ENCODE measurements at regions of chr11 and their contacts with region 1.

Region 1: DNA sequence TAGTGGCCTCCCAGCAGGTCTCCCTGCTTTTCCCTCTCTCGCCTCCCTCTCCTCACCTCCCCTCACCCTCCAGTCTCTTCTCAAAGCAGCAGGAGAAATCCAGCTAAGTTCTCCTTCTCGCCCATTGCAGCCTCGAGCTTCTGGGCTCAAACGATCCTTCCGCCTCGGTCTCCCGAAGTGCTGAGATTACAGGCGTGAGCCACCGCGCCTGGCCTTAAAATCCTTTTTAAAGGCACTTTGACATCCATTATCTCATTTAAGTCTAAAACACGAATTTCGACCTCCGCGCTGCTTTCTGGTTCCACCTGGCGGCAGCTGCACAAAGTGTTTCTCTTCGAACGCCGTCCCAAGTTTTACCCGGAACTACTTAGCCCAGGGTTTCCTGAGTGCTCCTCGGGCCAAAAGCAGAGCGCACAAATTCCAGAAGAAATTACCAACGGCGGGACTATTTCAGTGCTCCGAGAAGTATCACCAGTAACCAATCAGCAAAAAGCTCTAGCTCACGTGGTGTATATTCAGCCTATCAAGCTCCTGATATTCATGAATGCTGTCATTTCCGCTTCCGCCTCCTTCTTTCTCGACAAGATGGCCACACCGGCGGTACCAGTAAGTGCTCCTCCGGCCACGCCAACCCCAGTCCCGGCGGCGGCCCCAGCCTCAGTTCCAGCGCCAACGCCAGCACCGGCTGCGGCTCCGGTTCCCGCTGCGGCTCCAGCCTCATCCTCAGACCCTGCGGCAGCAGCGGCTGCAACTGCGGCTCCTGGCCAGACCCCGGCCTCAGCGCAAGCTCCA is at the start of gene EIF3F:
- DNase-seq: peak; percentile 92
- H3K4me3 Mint-ChIP-seq: peak within 1 kb of the TSS; percentile 89
- H3K27ac Mint-ChIP-seq: peak within 1 kb of the TSS; percentile 88
- H3K4me1 Mint-ChIP-seq: peaks cover 41% of the 10 kb centered on the region
- H3K27me3 Mint-ChIP-seq: no peaks in the 10 kb centered on the region
- total RNA-seq, gene EIF3F: 227 to 229 TPM

Region 2: GRCh38 chr11:7892840-7893254 is 94.1 kb before region 1 on chr11:
- CTCF ChIA-PET with region 1: interaction called, 60 read pairs
- POLR2A ChIA-PET with region 1: interaction called, 8 read pairs
- DNase-seq: no peak
- H3K4me3 Mint-ChIP-seq: no peak overlapping the region
- H3K27ac Mint-ChIP-seq: no peak overlapping the region
- H3K4me1 Mint-ChIP-seq: peaks cover 8% of the 10 kb centered on the region
- H3K27me3 Mint-ChIP-seq: peaks cover 9% of the 10 kb centered on the region

Region 3: GRCh38 chr11:8105666-8106065 is 118.7 kb after region 1 on chr11:
- CTCF ChIA-PET with region 1: no interaction called
- POLR2A ChIA-PET with region 1: no interaction called
- DNase-seq: no peak
- H3K4me3 Mint-ChIP-seq: no peak overlapping the region
- H3K27ac Mint-ChIP-seq: no peak overlapping the region
- H3K4me1 Mint-ChIP-seq: no peaks in the 10 kb centered on the region
- H3K27me3 Mint-ChIP-seq: no peaks in the 10 kb centered on the region